ENCODE measurements at regions of chr16 and their contacts with region 1.

Region 1: GRCh38 chr16:46947900-46948547 is 25.4 kb downstream of the DNAJA2 start:
- DNase-seq: peak; percentile 55
- CTCF ChIP-seq: peak; percentile 54

Region 2: DNA sequence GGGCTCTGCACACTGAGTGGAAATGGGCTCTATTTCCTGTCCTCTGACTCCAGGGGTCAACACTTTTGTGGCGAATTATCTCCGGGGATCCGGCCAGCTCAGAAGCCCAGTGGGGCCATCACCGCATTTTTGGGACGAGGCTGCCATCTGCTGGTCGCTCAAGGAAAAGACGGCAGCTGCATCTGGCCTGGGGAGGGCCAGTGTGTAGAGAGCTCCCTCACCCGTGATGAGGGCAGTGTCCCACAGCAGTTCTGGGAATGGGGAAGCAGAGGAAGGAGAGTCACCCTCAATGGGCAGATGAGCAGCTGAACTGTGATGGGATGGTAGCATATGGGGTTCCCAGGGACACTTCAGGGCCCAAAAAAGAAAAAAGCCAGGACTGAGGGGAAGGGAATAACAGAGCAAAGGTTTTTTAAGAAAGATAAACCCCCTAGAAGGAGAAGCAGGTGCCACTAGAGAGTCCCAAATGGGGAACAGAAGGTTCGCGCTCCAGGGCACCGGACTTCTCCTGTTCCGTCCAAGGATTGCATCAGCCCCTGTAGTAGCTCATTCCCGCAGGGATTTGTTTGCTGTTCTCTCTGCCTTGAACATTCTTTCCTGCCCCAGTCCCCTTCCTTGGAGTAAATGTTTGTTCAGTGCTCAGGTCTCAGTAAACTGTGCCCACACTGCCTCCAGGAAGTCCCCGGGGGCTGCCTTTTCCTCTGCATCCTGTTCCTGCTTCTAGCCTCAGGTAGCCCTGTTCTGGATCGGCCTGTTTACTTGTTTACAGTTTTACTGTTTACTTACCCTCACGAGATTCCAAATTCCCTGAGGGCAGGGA is 1217.1 kb after region 1 on chr16:
- in situ Hi-C with region 1: loop called (anchors 10 kb)
- DNase-seq: peak; percentile 75
- CTCF ChIP-seq: peak; percentile 93